ENCODE measurements at regions of chr12 and their contacts with region 1.

Region 1: GRCh38 chr12:80195074-80195726 is 95.9 kb downstream of the OTOGL start:
- DNase-seq: peak; percentile 33
- H3K27ac ChIP-seq: no peak overlapping the region
- CTCF ChIP-seq: peak; percentile 52

Region 2: DNA sequence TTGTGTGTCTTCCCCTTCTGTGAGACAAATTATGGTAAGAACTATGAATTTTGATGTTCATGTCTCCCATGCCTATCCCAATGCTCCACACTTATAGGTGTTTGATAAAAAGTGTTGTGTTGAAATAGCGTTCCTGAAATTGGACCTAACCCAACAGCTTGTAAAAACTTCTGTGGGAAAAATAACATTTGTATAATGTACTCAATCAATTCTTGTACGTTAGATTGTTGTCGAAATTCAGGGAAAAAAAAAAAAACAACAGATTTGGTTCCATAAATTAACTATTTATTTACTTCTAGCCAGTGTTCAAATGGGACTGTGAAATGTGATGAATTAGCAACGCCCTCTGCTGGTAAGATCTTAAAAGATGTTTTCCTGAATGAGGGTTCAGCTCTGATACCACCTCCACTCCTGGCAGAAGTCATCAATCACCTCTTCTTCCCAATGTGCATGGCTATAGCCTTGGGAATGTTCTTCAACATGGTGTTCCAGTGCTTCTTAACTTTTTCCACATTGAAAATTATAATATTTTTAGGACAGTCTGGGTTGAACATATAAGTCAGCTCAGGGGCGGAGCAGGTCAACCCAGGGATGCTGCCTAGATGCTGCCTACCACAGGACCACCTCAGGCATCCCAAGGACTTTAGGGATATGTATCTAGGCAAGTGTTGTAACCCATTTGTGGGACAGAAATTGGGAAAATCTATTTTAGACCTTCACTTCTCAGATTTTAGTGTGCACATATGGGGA is 74.8 kb after region 1 on chr12:
- CTCF ChIA-PET with region 1: interaction called, 33 read pairs
- POLR2A ChIA-PET with region 1: no interaction called
- DNase-seq: peak; percentile 27
- H3K27ac ChIP-seq: no peak overlapping the region
- CTCF ChIP-seq: peak; percentile 72